ENCODE measurements at regions of chr12 and their contacts with region 1.

Region 1: GRCh38 chr12:54379401-54380201 is 4.9 kb downstream of the ZNF385A start:
- DNase-seq: peak; percentile 96
- H3K4me3 ChIP-seq: peak overlapping the region; percentile 54 to 63
- H3K27ac ChIP-seq: peak overlapping the region in 1 of 2 experiments; percentile 60; a peak in 3 of 4 replicates
- H3K4me1 ChIP-seq: peaks cover 0 to 30% of the 10 kb centered on the region in 2 experiments; a peak in 1 of 4 replicates
- H3K27me3 ChIP-seq: no peaks in the 10 kb centered on the region
- CTCF ChIP-seq: peak; percentile 100
- EP300 ChIP-seq: no peak
- RAD21 ChIP-seq: peak; percentile 89

Region 2: GRCh38 chr12:54214553-54215406 is 164.8 kb before region 1 on chr12:
- CTCF ChIA-PET with region 1: interaction called, 38 read pairs
- POLR2A ChIA-PET with region 1: no interaction called
- DNase-seq: peak; percentile 92
- H3K4me3 ChIP-seq: peak overlapping the region; percentile 41 to 62
- H3K27ac ChIP-seq: no peak overlapping the region
- H3K4me1 ChIP-seq: peaks cover 0 to 16% of the 10 kb centered on the region in 2 experiments; a peak in 1 of 4 replicates
- H3K27me3 ChIP-seq: no peaks in the 10 kb centered on the region
- CTCF ChIP-seq: peak; percentile 99
- EP300 ChIP-seq: no peak
- RAD21 ChIP-seq: peak; percentile 62

Region 3: GRCh38 chr12:54285150-54286041 is 94.2 kb before region 1 on chr12:
- CTCF ChIA-PET with region 1: interaction called, 10 read pairs
- POLR2A ChIA-PET with region 1: interaction called, 4 read pairs
- DNase-seq: no peak
- H3K4me3 ChIP-seq: peak overlapping the region; percentile 24 to 80; a peak in 3 of 4 replicates
- H3K27ac ChIP-seq: peak overlapping the region; percentile 21 to 36; a peak in 3 of 4 replicates
- H3K4me1 ChIP-seq: peaks cover 13 to 25% of the 10 kb centered on the region in 2 experiments; a peak in 3 of 4 replicates
- H3K27me3 ChIP-seq: no peaks in the 10 kb centered on the region
- CTCF ChIP-seq: peak; percentile 54
- EP300 ChIP-seq: no peak
- RAD21 ChIP-seq: peak; percentile 17; the same call in 1 of the 2 replicates

Region 4: GRCh38 chr12:54352022-54352531 is 27.5 kb before region 1 on chr12:
- CTCF ChIA-PET with region 1: interaction called, 118 read pairs
- POLR2A ChIA-PET with region 1: interaction called, 3 read pairs
- DNase-seq: peak; percentile 65
- H3K4me3 ChIP-seq: peak overlapping the region in 1 of 2 experiments; percentile 25; a peak in 2 of 4 replicates
- H3K27ac ChIP-seq: peak overlapping the region; percentile 63 to 99
- H3K4me1 ChIP-seq: peaks cover 25 to 41% of the 10 kb centered on the region in 2 experiments
- H3K27me3 ChIP-seq: no peaks in the 10 kb centered on the region
- CTCF ChIP-seq: no peak
- EP300 ChIP-seq: peak in 1 of 2 experiments; percentile 14; a peak in 1 of 4 replicates
- RAD21 ChIP-seq: no peak

Region 5: GRCh38 chr12:54390668-54391551 is 11.3 kb after region 1 on chr12:
- CTCF ChIA-PET with region 1: interaction called, 53 read pairs
- POLR2A ChIA-PET with region 1: interaction called, 3 read pairs
- DNase-seq: peak; percentile 83
- H3K4me3 ChIP-seq: peak overlapping the region in 1 of 2 experiments; percentile 50; a peak in 2 of 4 replicates
- H3K27ac ChIP-seq: no peak overlapping the region; a peak in 1 of 4 replicates
- H3K4me1 ChIP-seq: peaks cover 0 to 29% of the 10 kb centered on the region in 2 experiments; a peak in 1 of 4 replicates
- H3K27me3 ChIP-seq: no peaks in the 10 kb centered on the region
- CTCF ChIP-seq: no peak
- EP300 ChIP-seq: no peak
- RAD21 ChIP-seq: no peak

Region 6: DNA sequence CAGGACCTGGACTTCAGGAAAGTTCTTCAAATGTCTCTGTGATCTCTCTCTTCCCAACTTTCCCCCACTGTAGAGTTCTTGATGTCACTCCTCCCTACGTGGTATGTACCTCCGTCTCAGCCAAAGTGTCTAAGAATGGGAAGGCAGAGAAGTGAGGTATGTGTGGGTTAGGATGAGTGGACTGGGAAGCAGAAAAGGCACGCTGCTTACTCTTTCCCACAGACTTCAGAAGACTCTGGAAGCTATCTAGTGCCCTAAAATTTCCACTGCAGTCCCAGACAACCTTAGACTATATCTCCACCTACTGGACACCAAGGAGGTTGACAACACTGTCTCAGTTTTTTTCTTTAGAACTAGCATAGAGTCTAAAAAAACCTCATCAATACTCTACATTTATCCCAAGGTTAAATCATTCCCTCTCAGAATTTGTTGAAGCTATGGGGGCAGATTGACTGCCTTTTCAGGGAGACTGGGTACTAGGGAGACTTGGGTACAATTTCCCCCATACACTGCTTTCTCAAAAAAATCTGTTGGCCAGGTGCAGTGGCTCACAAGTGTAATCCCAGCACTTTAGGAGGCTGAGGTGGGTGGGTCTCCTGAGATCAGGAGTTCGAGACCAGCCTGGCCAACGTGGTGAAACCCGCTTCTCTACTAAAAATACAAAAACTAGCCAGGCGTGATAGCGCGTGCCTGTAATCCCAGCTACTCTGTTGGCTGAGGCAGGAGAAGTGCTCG is 60.1 kb after region 1 on chr12:
- CTCF ChIA-PET with region 1: interaction called, 18 read pairs
- POLR2A ChIA-PET with region 1: no interaction called
- DNase-seq: peak; percentile 65
- H3K4me3 ChIP-seq: no peak overlapping the region
- H3K27ac ChIP-seq: no peak overlapping the region
- H3K4me1 ChIP-seq: no peaks in the 10 kb centered on the region
- H3K27me3 ChIP-seq: peaks cover 15% of the 10 kb centered on the region; the same call in 1 of the 2 replicates
- CTCF ChIP-seq: peak; percentile 87
- EP300 ChIP-seq: no peak
- RAD21 ChIP-seq: peak; percentile 91

Region 7: GRCh38 chr12:54463034-54463433 is 83.4 kb after region 1 on chr12:
- CTCF ChIA-PET with region 1: no interaction called
- POLR2A ChIA-PET with region 1: no interaction called
- DNase-seq: no peak
- H3K4me3 ChIP-seq: no peak overlapping the region
- H3K27ac ChIP-seq: no peak overlapping the region
- H3K4me1 ChIP-seq: no peaks in the 10 kb centered on the region
- H3K27me3 ChIP-seq: peaks cover 10% of the 10 kb centered on the region; the same call in 1 of the 2 replicates
- CTCF ChIP-seq: no peak
- EP300 ChIP-seq: no peak
- RAD21 ChIP-seq: no peak

Measured in SK-N-SH (cell line).